Panc1 (cell line): ENCODE measurements at regions of chr11 and their contacts with region 1.

Region 1: DNA sequence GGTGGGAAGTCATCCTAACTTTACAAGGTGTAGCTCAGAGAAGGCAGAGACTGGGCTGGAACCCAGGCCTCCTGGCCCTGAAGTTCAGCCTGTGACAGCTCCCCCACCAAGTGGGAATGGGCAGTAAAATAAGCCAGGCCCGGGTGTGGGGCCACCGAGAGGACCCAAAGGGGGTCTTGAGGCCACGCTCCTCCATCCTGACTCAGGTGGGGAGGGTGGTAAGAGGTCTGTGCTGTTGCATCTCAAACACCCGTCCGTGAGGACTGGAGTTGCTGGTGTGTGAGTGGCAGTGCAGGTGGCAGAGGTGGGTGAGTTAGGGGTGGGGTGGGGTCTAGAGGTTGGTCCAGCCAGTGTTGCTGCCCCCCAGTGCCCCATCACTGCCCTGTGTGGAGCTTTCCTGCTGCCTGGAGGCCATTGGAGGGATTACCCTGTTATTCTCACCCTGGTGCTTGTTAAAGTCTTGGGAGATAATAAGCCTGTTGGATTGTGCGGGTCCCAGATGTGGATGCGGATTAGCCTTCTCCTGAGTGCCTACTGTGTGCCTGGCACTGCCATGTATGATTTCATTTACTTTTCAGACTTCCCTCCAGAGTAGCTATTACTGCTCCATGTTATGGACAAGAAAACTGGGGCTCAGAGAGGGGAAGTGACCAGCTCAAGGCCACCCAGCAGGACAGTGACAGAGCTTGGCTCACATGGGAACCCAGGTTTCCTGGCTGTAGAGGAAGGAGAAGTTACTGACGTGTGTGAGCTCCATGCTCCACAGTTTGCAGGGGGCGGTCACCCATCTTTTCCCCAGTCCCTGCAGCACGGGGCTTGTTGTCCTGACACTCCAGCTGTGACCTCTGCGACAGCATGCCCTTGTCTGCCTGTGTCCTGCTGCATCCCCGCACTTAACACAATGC is 12.9 kb downstream of the SERPINH1 start:
- DNase-seq: no peak
- ATAC-seq: peak; percentile 50; the same call in 1 of the 2 replicates
- H3K4me3 ChIP-seq: no peak overlapping the region
- H3K27ac ChIP-seq: no peak overlapping the region
- H3K4me1 ChIP-seq: no peaks in the 10 kb centered on the region; the same call in 1 of the 2 replicates
- H3K27me3 ChIP-seq: no peaks in the 10 kb centered on the region; the same call in 1 of the 2 replicates
- CTCF ChIP-seq: no peak

Region 2: GRCh38 chr11:75547580-75548058 is 27.3 kb before region 1 on chr11:
- CTCF ChIA-PET with region 1: interaction called, 13 read pairs
- POLR2A ChIA-PET with region 1: no interaction called
- in situ Hi-C with region 1: no loop called
- intact Hi-C with region 1: no loop called
- DNase-seq: no peak
- ATAC-seq: peak; percentile 91
- H3K4me3 ChIP-seq: no peak overlapping the region
- H3K27ac ChIP-seq: no peak overlapping the region
- H3K4me1 ChIP-seq: no peaks in the 10 kb centered on the region
- H3K27me3 ChIP-seq: no peaks in the 10 kb centered on the region
- CTCF ChIP-seq: peak; percentile 97